Pancreas (tissue), 10 donors: ENCODE measurements at regions of chr14 and their contacts with region 1.

Region 1: DNA sequence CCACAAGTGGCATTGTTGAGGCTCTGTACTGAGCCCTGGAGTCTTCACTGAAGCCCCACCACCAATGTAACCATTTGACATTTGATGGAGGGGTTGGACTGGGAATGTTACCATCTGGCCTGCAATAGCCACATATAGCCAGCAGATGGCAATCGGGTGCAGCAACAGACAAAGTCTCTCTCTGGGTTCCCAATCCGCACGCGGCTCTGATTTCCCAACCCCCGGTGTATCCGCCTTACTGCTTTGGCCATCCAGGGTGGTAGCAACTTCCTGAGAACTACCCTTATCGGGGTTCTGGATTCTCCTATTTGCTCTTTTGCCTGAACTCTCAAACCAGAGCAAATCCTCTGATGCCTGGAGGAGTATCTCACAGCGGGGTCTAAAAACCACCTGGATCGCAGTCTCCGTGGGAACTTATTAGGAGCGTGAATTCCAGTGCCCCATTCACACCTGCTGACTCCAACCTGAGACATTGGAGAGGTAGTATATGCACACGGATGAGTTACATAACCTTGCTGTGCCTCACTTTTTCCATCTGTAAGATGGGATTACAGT is 14.2 kb downstream of the VRTN start:
- DNase-seq: peak; percentile 71 to 89 (median 82)
- ATAC-seq: peak; percentile 80 to 94 (median 88)
- H3K4me3 ChIP-seq: no peak overlapping the region
- H3K27ac ChIP-seq: no peak overlapping the region
- H3K4me1 ChIP-seq: peaks cover 8 to 12% (median 10%) of the 10 kb centered on the region in 3 donors
- H3K27me3 ChIP-seq: no peaks in the 10 kb centered on the region
- CTCF ChIP-seq: peak; percentile 79 to 90 (median 84)

Region 2: DNA sequence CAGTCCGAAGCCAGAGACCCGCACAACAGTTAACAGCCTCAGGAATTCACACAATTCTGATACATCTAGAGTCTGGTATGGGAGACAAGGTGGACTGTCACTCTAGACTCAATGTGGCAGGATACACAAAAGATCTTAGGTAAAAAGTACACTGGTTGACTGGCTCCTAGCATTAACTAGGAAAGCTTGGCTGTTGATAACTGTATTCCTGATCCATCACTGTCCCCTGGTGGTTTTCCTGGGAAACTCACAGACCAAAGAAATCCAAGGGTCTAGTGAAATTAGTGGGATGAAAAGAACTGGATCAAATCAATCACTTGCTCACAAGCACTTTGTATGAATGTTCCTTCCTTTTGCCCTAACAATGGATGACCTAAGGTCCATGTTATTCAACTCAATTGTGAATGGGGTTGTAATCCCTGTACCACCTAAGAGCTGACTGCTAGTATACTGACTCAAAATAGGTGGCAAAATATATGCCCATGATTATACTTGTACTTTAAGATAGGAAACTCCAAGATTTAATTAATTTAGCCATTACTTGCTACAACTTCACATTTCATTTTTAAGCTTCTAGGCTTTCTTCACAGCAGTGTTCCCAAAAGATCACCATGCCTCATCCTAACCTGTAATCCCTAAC is 116.7 kb after region 1 on chr14:
- intact Hi-C with region 1: loop called in 2 of 3 experiments (anchors 10 kb)
- DNase-seq: no peak
- ATAC-seq: peak in 3 of 4 donors; percentile 62 to 70 (median 66)
- H3K4me3 ChIP-seq: no peak overlapping the region
- H3K27ac ChIP-seq: no peak overlapping the region
- H3K4me1 ChIP-seq: no peaks in the 10 kb centered on the region
- H3K27me3 ChIP-seq: no peaks in the 10 kb centered on the region
- CTCF ChIP-seq: peak in 2 of 4 donors; percentile 43

Region 3: DNA sequence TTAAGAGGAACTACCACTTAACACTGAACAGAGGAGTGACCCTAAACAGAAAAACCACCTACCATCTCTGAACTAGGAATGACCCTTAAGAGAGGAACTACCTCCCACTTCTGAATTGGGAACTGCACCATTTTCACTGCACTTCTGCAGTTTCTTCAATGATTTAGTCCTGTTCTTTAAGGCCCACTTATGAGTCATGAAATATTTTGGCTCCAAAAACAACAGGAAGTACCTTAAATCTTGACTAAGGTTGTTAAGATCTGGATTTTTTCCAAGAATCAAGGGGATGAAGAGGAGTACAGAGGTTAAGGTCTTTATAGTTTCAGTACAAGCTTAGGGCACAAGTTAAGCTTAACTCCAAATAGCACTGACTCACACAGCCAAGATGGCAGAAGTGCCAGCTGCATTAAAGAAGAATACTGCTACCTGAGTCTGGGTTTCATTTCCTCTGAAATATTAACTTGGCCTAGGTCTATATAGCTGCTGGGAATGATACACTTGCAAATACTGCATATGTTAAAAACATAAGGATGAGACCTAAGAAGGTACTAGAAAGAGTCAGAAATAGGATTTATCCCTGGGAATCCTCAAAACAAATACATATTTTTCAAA is 126.5 kb after region 1 on chr14:
- intact Hi-C with region 1: loop called in 1 of 3 experiments (anchors 10 kb)
- DNase-seq: no peak
- ATAC-seq: no peak
- H3K4me3 ChIP-seq: no peak overlapping the region
- H3K27ac ChIP-seq: peak overlapping the region in 1 of 4 donors; percentile 27
- H3K4me1 ChIP-seq: peaks cover 0 to 17% (median 8%) of the 10 kb centered on the region in 3 donors
- H3K27me3 ChIP-seq: no peaks in the 10 kb centered on the region
- CTCF ChIP-seq: no peak